Activated T-helper 1 cell treated with anti-CD3 and anti-CD28 coated beads, Interleukin-12 subunit alpha, Interleukin-12 subunit beta, Interleukin-2, Interleukin-4 antibody, amounts not matched to agents 30 ng/mL and 10 ng/mL and 1 ng/mL, durations not matched to agents 14 hours and 24 hours and 36 hours (primary cell): ENCODE measurements at regions of chr5 and their contacts with region 1.

Region 1: DNA sequence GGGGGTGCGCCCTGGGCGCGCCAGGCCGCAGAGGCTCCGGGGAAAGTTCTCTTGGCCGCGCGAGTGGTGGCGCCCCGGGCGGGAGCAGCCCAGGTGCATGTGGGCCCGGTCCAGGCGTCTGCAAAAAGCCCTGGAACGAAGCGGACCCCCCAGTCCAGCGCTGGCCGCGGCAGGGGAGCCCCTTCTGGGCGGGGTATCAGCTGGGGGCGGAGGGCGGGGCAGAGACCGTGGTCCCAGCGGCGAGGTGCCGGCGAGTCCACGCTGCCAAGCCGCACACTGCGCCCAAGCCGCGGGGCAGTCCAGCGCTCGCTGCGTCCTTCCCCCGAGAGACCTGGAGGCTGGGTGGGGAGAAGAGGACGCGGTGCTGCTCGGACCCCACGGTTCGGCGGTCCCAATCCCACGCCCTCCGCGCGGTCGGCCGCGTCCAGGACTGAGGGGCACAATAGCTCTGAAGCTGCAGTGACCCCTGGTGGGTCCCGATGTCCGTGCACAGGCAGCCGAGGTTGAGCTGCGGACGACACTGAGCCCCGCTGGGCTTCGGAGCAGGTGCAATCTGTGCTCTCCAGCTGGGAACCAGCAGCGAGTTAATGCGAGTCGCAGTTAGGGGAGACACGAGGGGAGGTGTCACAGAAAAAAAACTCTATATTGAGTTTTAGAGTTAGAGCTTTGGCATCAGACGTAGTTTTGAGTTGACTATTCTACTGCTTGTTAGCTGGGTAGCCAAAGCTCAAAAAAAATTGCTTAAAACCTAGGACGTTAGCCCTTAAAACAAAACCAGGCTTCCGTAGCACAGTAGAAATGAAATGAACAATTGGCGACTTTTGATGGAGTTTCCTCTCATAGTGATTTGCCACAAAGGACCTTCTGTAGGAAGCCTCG is 1.1 kb upstream of the EPB41L4A start:
- DNase-seq: peak; percentile 4
- H3K4me3 Mint-ChIP-seq: peak overlapping the region; percentile 24
- H3K27ac Mint-ChIP-seq: no peak overlapping the region
- H3K4me1 Mint-ChIP-seq: peaks cover 10% of the 10 kb centered on the region
- H3K27me3 Mint-ChIP-seq: peaks cover 64% of the 10 kb centered on the region

Region 2: GRCh38 chr5:112737463-112738190 is 317.4 kb after region 1 on chr5 and contains the start of gene APC:
- intact Hi-C with region 1: loop called (anchors 2 kb)
- DNase-seq: peak; percentile 72
- H3K4me3 Mint-ChIP-seq: peak within 1 kb of the TSS; percentile 89
- H3K27ac Mint-ChIP-seq: peak within 1 kb of the TSS; percentile 19
- H3K4me1 Mint-ChIP-seq: peaks cover 17% of the 10 kb centered on the region
- H3K27me3 Mint-ChIP-seq: peaks cover 2% of the 10 kb centered on the region
- total RNA-seq, gene APC: 20.3 and 24.4 TPM in 2 replicates